AG04449 (cell line): ENCODE measurements at regions of chr10 and their contacts with region 1.

Region 1: GRCh38 chr10:63720072-63720537 is 198.9 kb downstream of the REEP3 start:
- DNase-seq: no peak
- H3K4me3 ChIP-seq: no peak overlapping the region
- CTCF ChIP-seq: peak; percentile 71

Region 2: GRCh38 chr10:63157845-63158624 is 562.1 kb before region 1 on chr10:
- CTCF ChIA-PET with region 1: interaction called, 375 read pairs
- POLR2A ChIA-PET with region 1: no interaction called
- DNase-seq: peak; percentile 71
- H3K4me3 ChIP-seq: no peak overlapping the region
- CTCF ChIP-seq: peak; percentile 61

Region 3: GRCh38 chr10:63197344-63198106 is 522.6 kb before region 1 on chr10:
- CTCF ChIA-PET with region 1: interaction called, 22 read pairs
- POLR2A ChIA-PET with region 1: no interaction called
- DNase-seq: peak; percentile 70
- H3K4me3 ChIP-seq: no peak overlapping the region
- CTCF ChIP-seq: no peak

Region 4: DNA sequence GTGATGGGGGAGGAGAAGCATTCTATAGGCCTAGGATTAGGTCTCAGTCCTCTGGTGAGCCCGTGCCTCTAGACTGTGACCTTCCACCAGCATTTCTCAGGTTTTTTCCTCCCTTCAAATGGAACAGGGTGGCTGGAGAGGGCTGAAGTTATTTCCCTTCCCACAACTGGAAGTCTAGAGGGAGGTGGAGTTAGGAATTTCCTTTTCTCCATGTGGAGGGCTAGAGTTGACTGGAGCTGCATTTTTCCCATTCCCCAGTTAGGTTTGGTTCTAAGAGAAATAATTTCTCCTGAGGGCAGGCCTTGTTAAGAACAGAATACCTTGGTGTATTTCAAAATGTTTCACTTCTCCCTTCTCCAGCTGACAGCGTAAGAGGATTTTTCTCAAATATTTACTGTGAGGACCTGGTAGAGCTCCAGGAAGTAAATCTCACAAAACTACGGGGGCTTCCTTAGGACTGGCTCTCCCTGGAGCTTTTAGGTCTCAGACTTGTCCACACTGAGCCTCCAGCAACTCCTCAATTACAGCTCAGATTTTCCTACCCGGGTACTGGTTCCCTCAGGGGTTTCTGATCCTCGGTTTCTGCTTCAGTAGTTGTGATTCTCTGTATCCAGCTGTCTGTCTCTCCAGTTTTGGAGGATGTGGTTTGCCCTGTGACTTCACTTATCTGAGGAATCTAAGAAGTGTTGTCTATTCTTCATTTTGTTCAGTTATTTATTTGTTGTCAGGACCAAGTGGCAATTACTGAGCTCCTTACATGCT is 204.9 kb before region 1 on chr10:
- CTCF ChIA-PET with region 1: interaction called, 13 read pairs
- POLR2A ChIA-PET with region 1: no interaction called
- DNase-seq: peak; percentile 21
- H3K4me3 ChIP-seq: no peak overlapping the region
- CTCF ChIP-seq: no peak

Region 5: GRCh38 chr10:63670291-63670898 is 49.7 kb before region 1 on chr10:
- CTCF ChIA-PET with region 1: interaction called, 12 read pairs
- POLR2A ChIA-PET with region 1: no interaction called
- DNase-seq: no peak
- H3K4me3 ChIP-seq: no peak overlapping the region
- CTCF ChIP-seq: no peak

Region 6: GRCh38 chr10:63738410-63738809 is 18.3 kb after region 1 on chr10:
- CTCF ChIA-PET with region 1: interaction called, 74 read pairs
- POLR2A ChIA-PET with region 1: no interaction called
- DNase-seq: no peak
- H3K4me3 ChIP-seq: no peak overlapping the region
- CTCF ChIP-seq: no peak